Activated naive CD4-positive, alpha-beta T cell treated with anti-CD3 and anti-CD28 coated beads for 36 hours (primary cell): ENCODE measurements at regions of chr7 and their contacts with region 1.

Region 1: GRCh38 chr7:17668122-17668521 is 272.2 kb downstream of the SNX13 start:
- DNase-seq: no peak
- H3K4me3 Mint-ChIP-seq: no peak overlapping the region
- H3K27ac Mint-ChIP-seq: no peak overlapping the region
- H3K4me1 Mint-ChIP-seq: no peaks in the 10 kb centered on the region
- H3K27me3 Mint-ChIP-seq: peaks cover 5% of the 10 kb centered on the region

Region 2: GRCh38 chr7:17680943-17681351 is 12.8 kb after region 1 on chr7:
- CTCF ChIA-PET with region 1: interaction called, 19 read pairs
- intact Hi-C with region 1: no loop called
- DNase-seq: no peak
- H3K4me3 Mint-ChIP-seq: no peak overlapping the region
- H3K27ac Mint-ChIP-seq: peak overlapping the region; percentile 9
- H3K4me1 Mint-ChIP-seq: no peaks in the 10 kb centered on the region
- H3K27me3 Mint-ChIP-seq: no peaks in the 10 kb centered on the region

Region 3: GRCh38 chr7:18144166-18144565 is 476.0 kb after region 1 on chr7:
- CTCF ChIA-PET with region 1: no interaction called
- intact Hi-C with region 1: no loop called
- DNase-seq: no peak
- H3K4me3 Mint-ChIP-seq: no peak overlapping the region
- H3K27ac Mint-ChIP-seq: no peak overlapping the region
- H3K4me1 Mint-ChIP-seq: no peaks in the 10 kb centered on the region
- H3K27me3 Mint-ChIP-seq: peaks cover 7% of the 10 kb centered on the region